Psoas muscle (tissue), 8 donors: ENCODE measurements at regions of chr15 and their contacts with region 1.

Region 1: GRCh38 chr15:31031471-31032067 is 40.1 kb upstream of the MTMR10 start:
- DNase-seq: no peak
- ATAC-seq: peak in 1 of 4 donors; percentile 40
- H3K4me3 ChIP-seq: no peak overlapping the region
- H3K27ac ChIP-seq: no peak overlapping the region
- H3K4me1 ChIP-seq: no peaks in the 10 kb centered on the region
- H3K27me3 ChIP-seq: no peaks in the 10 kb centered on the region
- CTCF ChIP-seq: no peak

Region 2: GRCh38 chr15:30872341-30872748 is 159.2 kb before region 1 on chr15:
- intact Hi-C with region 1: no loop called
- DNase-seq: no peak
- ATAC-seq: peak in 3 of 4 donors; percentile 54 to 79 (median 60)
- H3K4me3 ChIP-seq: no peak overlapping the region
- H3K27ac ChIP-seq: no peak overlapping the region
- H3K4me1 ChIP-seq: no peaks in the 10 kb centered on the region
- H3K27me3 ChIP-seq: no peaks in the 10 kb centered on the region
- CTCF ChIP-seq: no peak

Region 3: GRCh38 chr15:30991255-30992072 is 40.1 kb before region 1 on chr15 and contains the start of gene MTMR10:
- intact Hi-C with region 1: no loop called
- DNase-seq: peak; percentile 66 to 89
- ATAC-seq: peak; percentile 90 to 92 (median 91)
- H3K4me3 ChIP-seq: peak within 1 kb of the TSS; percentile 84
- H3K27ac ChIP-seq: peak within 1 kb of the TSS; percentile 92
- H3K4me1 ChIP-seq: peaks cover 43% of the 10 kb centered on the region
- H3K27me3 ChIP-seq: no peaks in the 10 kb centered on the region
- CTCF ChIP-seq: no peak
- total RNA-seq, gene MTMR10: 22.1 to 52.3 (median 37.1) TPM

Region 4: DNA sequence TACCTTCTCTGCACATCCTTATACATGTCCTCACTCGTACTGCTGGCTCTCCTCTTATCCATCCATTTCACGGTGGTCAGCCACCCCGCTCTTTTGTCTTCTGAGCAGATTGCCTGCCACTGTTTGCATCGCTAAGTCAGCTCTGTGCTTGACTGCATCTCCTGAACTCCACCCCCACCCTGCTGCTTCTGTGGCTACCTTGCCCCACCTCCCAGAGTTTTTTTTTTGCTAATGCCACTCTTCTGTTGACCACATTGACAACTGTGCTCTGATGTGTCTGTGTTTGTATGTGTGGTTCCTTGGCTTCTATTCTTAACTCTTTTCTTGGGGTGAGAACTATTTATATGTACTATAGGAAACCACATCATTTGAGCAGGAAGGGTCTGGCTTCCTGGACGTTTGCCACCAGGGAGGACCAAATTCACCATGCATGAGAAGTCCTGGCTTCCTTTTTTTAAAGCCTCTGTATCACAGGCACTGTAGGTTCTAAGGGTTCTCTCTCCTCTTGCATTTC is 27.3 kb before region 1 on chr15:
- intact Hi-C with region 1: loop called in 1 of 2 experiments (anchors 2 kb)
- DNase-seq: peak in 1 of 2 donors; percentile 57
- ATAC-seq: no peak
- H3K4me3 ChIP-seq: no peak overlapping the region
- H3K27ac ChIP-seq: no peak overlapping the region
- H3K4me1 ChIP-seq: no peaks in the 10 kb centered on the region
- H3K27me3 ChIP-seq: no peaks in the 10 kb centered on the region
- CTCF ChIP-seq: no peak